ENCODE measurements at regions of chr12 and their contacts with region 1.

Region 1: DNA sequence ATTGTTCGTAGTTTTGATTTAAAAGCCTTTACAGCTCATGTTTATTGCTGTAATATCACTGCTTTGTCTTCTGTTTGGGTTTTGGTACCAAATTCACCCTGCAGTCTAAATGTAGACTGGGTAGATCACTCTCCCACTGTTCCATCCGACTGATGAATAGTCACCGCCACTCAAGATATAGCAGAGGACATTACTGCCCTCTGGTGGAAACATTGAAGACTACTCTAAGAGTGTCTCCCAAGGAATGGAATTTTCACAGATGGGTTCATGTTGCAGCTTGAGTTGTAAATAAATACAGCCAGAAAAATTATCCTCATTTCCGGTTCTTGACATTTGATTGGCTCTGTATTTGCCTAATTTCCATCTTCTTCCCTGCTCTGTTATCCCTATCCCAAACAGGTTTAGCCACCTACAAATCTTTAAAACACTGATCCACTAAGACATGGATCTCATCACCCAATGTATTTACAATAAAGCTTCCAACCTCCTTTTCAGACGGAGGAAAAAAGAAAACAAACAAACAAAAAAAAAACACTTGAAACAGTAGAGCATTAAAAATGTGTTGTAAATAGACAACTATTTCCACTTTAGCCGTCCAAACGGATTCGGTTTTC is 198.3 kb upstream of the CPNE8 start:
- DNase-seq: no peak
- H3K4me3 Mint-ChIP-seq: no peak overlapping the region
- H3K27ac Mint-ChIP-seq: no peak overlapping the region
- H3K4me1 Mint-ChIP-seq: peaks cover 3% of the 10 kb centered on the region
- H3K27me3 Mint-ChIP-seq: no peaks in the 10 kb centered on the region

Region 2: DNA sequence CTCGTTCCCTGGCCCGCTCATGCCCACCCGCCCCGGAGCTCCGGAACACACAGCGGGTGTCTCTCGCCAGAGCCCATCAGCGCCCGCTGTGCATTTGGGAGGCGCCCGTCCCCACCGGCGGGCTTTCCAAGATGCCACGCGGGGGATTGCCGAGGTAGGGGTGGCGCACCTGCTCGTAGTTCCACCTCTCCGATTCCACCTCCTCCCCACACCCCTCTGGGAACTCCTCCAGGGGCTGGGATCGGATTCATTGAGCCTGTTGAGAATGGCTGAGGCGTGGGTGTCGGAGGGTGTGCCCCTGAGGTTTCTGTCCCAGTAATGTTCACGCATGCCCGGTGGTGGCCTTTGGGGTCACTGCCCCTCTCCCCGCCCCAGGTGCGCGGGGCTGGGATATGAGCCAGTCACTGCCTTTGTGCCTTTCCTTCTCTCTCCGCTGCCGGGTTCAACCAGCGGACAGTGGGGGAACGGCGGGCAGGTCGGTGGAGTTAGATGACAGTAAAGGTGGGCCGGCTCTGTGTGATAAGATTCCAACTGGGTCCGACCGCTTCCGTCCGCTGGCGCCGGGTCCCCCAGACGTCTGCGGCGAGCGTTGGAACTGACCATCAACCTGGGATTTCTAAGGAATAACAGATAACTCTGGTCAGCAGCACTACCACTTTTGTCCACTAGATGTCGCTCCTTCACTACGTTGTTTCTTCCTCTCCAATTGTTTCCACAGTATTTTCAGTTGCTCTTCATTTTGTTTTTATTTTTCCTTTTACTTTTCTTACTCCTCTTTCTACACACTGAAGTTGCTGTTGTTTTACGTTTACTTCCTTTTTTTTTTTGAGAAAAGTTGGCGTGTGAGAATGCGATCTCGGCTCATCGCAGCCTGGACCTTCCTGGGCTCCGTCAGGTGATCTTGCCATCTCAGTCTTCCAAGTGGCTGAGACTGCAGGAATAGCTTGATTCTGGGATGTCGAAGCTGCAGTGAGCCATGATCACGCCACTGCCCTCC is 965.1 kb before region 1 on chr12:
- CTCF ChIA-PET with region 1: no interaction called
- POLR2A ChIA-PET with region 1: no interaction called
- intact Hi-C with region 1: loop called (anchors 5 kb)
- DNase-seq: peak; percentile 65
- H3K4me3 Mint-ChIP-seq: peak overlapping the region; percentile 59
- H3K27ac Mint-ChIP-seq: no peak overlapping the region
- H3K4me1 Mint-ChIP-seq: peaks cover 6% of the 10 kb centered on the region
- H3K27me3 Mint-ChIP-seq: no peaks in the 10 kb centered on the region

Region 3: DNA sequence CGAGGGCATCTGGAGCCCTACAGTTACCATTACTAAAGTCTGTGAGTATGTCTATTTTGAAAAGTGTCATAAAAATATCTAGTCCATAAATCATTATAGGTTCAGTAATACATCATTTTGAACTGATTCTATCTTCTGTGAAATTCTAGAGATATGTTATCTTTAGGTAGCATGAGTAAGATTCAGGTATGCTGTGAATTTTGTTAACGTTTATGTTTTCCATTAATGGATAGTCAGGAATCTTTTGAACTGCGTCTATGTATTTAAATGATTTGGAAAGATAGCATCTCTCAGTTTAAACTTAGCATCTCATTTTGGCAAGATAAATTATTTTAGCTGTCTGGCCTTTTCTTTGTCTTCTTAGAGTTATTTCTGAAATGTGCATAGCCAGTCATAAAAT is 778.8 kb before region 1 on chr12:
- CTCF ChIA-PET with region 1: interaction called, 16 read pairs
- POLR2A ChIA-PET with region 1: no interaction called
- intact Hi-C with region 1: loop called (anchors 1 kb)
- DNase-seq: no peak
- H3K4me3 Mint-ChIP-seq: no peak overlapping the region
- H3K27ac Mint-ChIP-seq: no peak overlapping the region
- H3K4me1 Mint-ChIP-seq: no peaks in the 10 kb centered on the region
- H3K27me3 Mint-ChIP-seq: no peaks in the 10 kb centered on the region

Region 4: GRCh38 chr12:38332814-38333213 is 770.8 kb before region 1 on chr12:
- CTCF ChIA-PET with region 1: interaction called, 16 read pairs
- POLR2A ChIA-PET with region 1: no interaction called
- intact Hi-C with region 1: loop called (anchors 1 kb)
- DNase-seq: no peak
- H3K4me3 Mint-ChIP-seq: no peak overlapping the region
- H3K27ac Mint-ChIP-seq: no peak overlapping the region
- H3K4me1 Mint-ChIP-seq: no peaks in the 10 kb centered on the region
- H3K27me3 Mint-ChIP-seq: no peaks in the 10 kb centered on the region

Region 5: DNA sequence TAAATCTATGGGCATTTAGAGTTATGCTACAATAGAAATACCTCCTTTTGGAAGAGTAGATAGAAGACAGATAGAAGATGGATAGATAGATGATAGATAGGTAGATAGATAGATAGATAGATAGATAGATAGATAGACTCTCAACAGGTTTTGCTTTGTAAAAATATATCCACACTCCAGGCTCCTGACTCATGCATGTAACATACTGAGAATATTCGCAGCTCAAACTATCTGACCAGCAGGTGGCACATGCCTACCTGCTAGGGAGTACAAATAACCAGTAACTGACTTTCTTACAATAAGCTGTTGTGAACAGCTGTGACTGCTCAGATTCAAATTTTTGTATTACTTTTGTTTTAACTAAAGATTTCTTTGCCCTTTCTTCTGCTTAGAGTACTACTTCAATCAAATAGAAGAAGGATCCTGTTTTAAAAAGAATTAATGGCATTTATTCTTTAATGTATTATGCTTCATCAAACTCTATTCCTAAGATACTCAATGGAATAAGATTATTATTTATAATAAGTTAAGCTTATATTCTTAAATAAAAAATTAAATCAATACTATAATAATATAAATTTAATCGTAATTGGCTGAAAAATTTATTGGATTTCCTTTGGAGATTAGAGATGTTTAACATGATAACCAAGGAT is 182.5 kb before region 1 on chr12:
- CTCF ChIA-PET with region 1: interaction called, 39 read pairs
- POLR2A ChIA-PET with region 1: no interaction called
- intact Hi-C with region 1: loop called (anchors 1 kb)
- DNase-seq: peak; percentile 46
- H3K4me3 Mint-ChIP-seq: no peak overlapping the region
- H3K27ac Mint-ChIP-seq: no peak overlapping the region
- H3K4me1 Mint-ChIP-seq: no peaks in the 10 kb centered on the region
- H3K27me3 Mint-ChIP-seq: no peaks in the 10 kb centered on the region